Aorta (tissue), 5 donors: ENCODE measurements at regions of chr3 and their contacts with region 1.

Region 1: GRCh38 chr3:24680214-24680967 is 185.7 kb upstream of the THRB start:
- DNase-seq: peak; percentile 79 to 93
- ATAC-seq: peak; percentile 78
- H3K4me3 ChIP-seq: no peak overlapping the region
- H3K27ac ChIP-seq: no peak overlapping the region
- H3K4me1 ChIP-seq: peaks cover 0 to 2% of the 10 kb centered on the region in 2 donors
- H3K27me3 ChIP-seq: peaks cover 0 to 2% of the 10 kb centered on the region in 2 donors

Region 2: DNA sequence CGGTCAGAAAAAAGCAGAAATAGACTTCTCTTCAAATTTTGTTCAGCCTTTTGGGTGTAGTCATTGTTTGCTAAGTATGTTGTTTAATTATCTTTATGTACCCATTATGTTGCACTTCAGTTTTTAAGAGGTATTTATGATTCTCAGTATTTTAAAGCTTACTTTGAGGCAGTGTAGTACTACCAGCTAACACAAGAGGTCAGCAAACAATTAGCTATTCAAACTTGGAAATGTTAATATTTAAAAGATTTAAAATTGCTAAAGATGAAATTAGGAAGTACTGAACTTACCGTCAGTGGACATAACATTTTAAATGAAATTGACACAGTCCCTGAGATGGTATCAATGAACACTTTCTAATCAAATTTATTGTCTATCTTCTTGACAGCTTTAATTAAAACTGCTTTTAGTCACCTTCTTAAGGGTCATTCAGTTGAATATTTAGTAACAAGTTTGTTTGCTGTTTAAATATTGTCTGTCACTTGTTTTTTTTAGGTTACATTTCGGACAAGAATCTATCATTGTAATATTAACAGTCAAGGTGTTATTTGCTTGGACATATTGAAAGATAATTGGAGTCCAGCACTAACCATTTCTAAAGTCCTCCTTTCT is 791.7 kb before region 1 on chr3:
- intact Hi-C with region 1: loop called (anchors 10 kb)
- DNase-seq: no peak
- ATAC-seq: no peak
- H3K4me3 ChIP-seq: no peak overlapping the region
- H3K27ac ChIP-seq: no peak overlapping the region
- H3K4me1 ChIP-seq: no peaks in the 10 kb centered on the region
- H3K27me3 ChIP-seq: no peaks in the 10 kb centered on the region

Region 3: GRCh38 chr3:23894254-23895061 is 785.9 kb before region 1 on chr3:
- intact Hi-C with region 1: loop called (anchors 10 kb)
- DNase-seq: no peak
- ATAC-seq: no peak
- H3K4me3 ChIP-seq: no peak overlapping the region
- H3K27ac ChIP-seq: no peak overlapping the region
- H3K4me1 ChIP-seq: no peaks in the 10 kb centered on the region
- H3K27me3 ChIP-seq: no peaks in the 10 kb centered on the region

Region 4: GRCh38 chr3:23999012-23999641 is 681.3 kb before region 1 on chr3:
- intact Hi-C with region 1: loop called (anchors 2 to 5 kb)
- DNase-seq: peak; percentile 76 to 91
- ATAC-seq: peak; percentile 66
- H3K4me3 ChIP-seq: no peak overlapping the region
- H3K27ac ChIP-seq: no peak overlapping the region
- H3K4me1 ChIP-seq: peaks cover 0 to 5% of the 10 kb centered on the region in 2 donors
- H3K27me3 ChIP-seq: no peaks in the 10 kb centered on the region

Region 5: GRCh38 chr3:24365194-24365612 is 315.2 kb before region 1 on chr3:
- intact Hi-C with region 1: loop called in 1 of 2 experiments (anchors 10 kb)
- DNase-seq: peak in 1 of 2 donors; percentile 72
- ATAC-seq: peak; percentile 83
- H3K4me3 ChIP-seq: no peak overlapping the region
- H3K27ac ChIP-seq: peak overlapping the region in 1 of 2 donors; percentile 37
- H3K4me1 ChIP-seq: peaks cover 6 to 17% of the 10 kb centered on the region in 2 donors
- H3K27me3 ChIP-seq: no peaks in the 10 kb centered on the region